T-cell (primary cell): ENCODE measurements at regions of chr6 and their contacts with region 1.

Region 1: GRCh38 chr6:10720265-10720959 is 2.5 kb upstream of the TMEM14C start:
- DNase-seq: peak in 34 of 35 experiments; percentile 13 to 68 (median 46)
- ATAC-seq: peak; percentile 58 to 68 (median 60)
- H3K4me3 ChIP-seq: peak overlapping the region; percentile 26 to 59
- H3K4me3 Mint-ChIP-seq: peak overlapping the region; percentile 91 to 95 (median 94)
- H3K27ac ChIP-seq: peak overlapping the region; percentile 62
- H3K27ac Mint-ChIP-seq: peak overlapping the region; percentile 93 to 95
- H3K4me1 ChIP-seq: peaks cover 2 to 42% of the 10 kb centered on the region in 2 experiments
- H3K4me1 Mint-ChIP-seq: peaks cover 48 to 52% (median 49%) of the 10 kb centered on the region in 3 donors
- H3K27me3 ChIP-seq: peaks cover 0 to 2% of the 10 kb centered on the region in 2 experiments
- H3K27me3 Mint-ChIP-seq: no peaks in the 10 kb centered on the region

Region 2: GRCh38 chr6:10668126-10668917 is 52.1 kb before region 1 on chr6:
- CTCF ChIA-PET with region 1: no interaction called
- POLR2A ChIA-PET with region 1: no interaction called
- DNase-seq: no peak
- ATAC-seq: no peak
- H3K4me3 ChIP-seq: no peak overlapping the region
- H3K4me3 Mint-ChIP-seq: no peak overlapping the region
- H3K27ac ChIP-seq: no peak overlapping the region
- H3K27ac Mint-ChIP-seq: no peak overlapping the region
- H3K4me1 ChIP-seq: no peaks in the 10 kb centered on the region
- H3K4me1 Mint-ChIP-seq: no peaks in the 10 kb centered on the region
- H3K27me3 ChIP-seq: peaks cover 0 to 9% of the 10 kb centered on the region in 2 experiments
- H3K27me3 Mint-ChIP-seq: peaks cover 12 to 22% of the 10 kb centered on the region in 2 donors

Region 3: DNA sequence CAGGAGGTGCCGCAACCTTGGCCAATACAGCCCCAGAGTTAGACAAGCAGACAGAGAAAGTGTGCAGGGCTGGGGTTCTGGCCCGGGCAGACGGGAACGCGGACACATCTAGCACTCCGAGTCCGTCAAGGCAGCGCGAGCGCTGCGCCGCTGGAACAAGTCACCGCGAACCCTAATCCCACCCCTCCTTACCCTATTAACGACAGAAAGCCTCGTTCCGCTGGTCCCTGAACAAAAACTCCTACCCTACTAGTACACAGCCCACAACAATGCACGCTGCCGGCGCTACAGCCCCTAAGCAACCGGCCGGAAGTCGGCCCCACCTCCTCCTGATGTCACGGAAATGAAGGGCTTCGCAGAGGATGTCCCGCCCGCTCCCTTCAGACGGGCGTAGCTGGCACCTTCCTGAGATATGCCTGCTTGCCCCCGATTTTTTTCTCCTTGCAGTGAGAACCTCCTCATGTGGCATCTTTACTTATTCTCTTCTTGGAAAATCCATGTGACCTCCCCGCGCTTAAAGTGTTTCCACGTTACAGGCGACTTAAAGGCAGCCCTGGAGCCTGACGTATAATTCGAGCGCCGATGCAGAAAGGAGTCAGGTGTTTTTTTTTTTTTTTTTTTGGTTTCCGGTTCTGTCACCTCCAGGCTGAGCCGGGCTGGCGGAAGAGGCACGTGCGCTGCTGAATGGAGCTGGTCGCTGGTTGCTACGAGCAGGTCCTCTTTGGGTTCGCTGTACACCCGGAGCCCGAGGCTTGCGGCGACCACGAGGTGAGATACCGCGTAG is 25.9 kb before region 1 on chr6 and contains the starts of genes C6orf52 and PAK1IP1:
- CTCF ChIA-PET with region 1: interaction called in 1 of 2 experiments, 11 read pairs
- POLR2A ChIA-PET with region 1: interaction called, 3 to 9 read pairs
- DNase-seq: peak; percentile 88 to 95 (median 93)
- ATAC-seq: peak; percentile 95 to 97 (median 96)
- H3K4me3 ChIP-seq: peak within 1 kb of the TSS; percentile 93 to 100
- H3K4me3 Mint-ChIP-seq: peak within 1 kb of the TSS; percentile 93 to 99 (median 99)
- H3K27ac ChIP-seq: peak within 1 kb of the TSS; percentile 98
- H3K27ac Mint-ChIP-seq: peak within 1 kb of the TSS; percentile 100
- H3K4me1 ChIP-seq: peaks cover 16 to 24% of the 10 kb centered on the region in 2 experiments
- H3K4me1 Mint-ChIP-seq: peaks cover 40 to 47% (median 41%) of the 10 kb centered on the region in 3 donors
- H3K27me3 ChIP-seq: no peaks in the 10 kb centered on the region
- H3K27me3 Mint-ChIP-seq: peaks cover 0 to 2% of the 10 kb centered on the region in 2 donors
- total RNA-seq, gene C6orf52: 1.1 to 1.7 (median 1.5) TPM in 3 of 5 donors, not detected in the others
- total RNA-seq, gene PAK1IP1: 5.2 to 10.2 (median 7.4) TPM

Region 4: DNA sequence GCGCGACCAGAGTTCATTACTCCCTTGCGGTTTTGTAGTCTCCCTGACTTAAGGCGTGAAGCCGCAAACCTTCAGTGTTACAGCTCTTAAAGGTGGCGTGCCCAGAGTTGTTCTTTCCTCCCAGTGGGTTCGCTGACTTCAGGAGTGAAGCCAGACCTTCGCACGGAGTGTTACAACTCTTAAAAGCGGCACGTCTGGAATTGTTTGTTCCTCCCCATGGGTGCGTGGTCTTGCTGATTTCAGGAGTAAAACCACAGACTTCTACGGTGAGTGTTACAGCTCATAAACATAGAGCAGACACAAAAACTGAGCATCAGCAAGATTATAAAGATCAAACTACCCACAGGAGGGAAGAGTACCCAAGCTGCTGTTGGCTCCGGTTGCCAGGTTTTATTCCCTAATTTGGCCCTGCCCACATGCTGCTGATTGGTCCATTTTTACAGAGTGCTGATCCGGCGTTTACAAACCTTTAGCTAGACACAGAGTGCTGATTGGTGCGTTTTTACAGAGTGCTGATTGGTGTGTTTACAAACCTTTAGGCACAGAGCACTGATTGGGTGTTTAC is 12.8 kb after region 1 on chr6:
- CTCF ChIA-PET with region 1: interaction called in 1 of 2 experiments, 10 read pairs
- POLR2A ChIA-PET with region 1: no interaction called
- DNase-seq: peak in 9 of 35 experiments; percentile 18 to 72 (median 30)
- ATAC-seq: peak in 2 of 4 experiments; percentile 55 to 59
- H3K4me3 ChIP-seq: no peak overlapping the region
- H3K4me3 Mint-ChIP-seq: no peak overlapping the region
- H3K27ac ChIP-seq: no peak overlapping the region
- H3K27ac Mint-ChIP-seq: no peak overlapping the region
- H3K4me1 ChIP-seq: peaks cover 0 to 15% of the 10 kb centered on the region in 2 experiments
- H3K4me1 Mint-ChIP-seq: peaks cover 0 to 2% (median 0%) of the 10 kb centered on the region in 3 donors
- H3K27me3 ChIP-seq: peaks cover 0 to 2% of the 10 kb centered on the region in 2 experiments
- H3K27me3 Mint-ChIP-seq: no peaks in the 10 kb centered on the region

Region 5: GRCh38 chr6:10854922-10855632 is 134.7 kb after region 1 on chr6:
- CTCF ChIA-PET with region 1: no interaction called
- POLR2A ChIA-PET with region 1: no interaction called
- DNase-seq: no peak
- ATAC-seq: no peak
- H3K4me3 ChIP-seq: no peak overlapping the region
- H3K4me3 Mint-ChIP-seq: no peak overlapping the region
- H3K27ac ChIP-seq: no peak overlapping the region
- H3K27ac Mint-ChIP-seq: no peak overlapping the region
- H3K4me1 ChIP-seq: no peaks in the 10 kb centered on the region
- H3K4me1 Mint-ChIP-seq: peaks cover 0 to 2% (median 0%) of the 10 kb centered on the region in 3 donors
- H3K27me3 ChIP-seq: peaks cover 0 to 13% of the 10 kb centered on the region in 2 experiments
- H3K27me3 Mint-ChIP-seq: peaks cover 16 to 17% of the 10 kb centered on the region in 2 donors